ENCODE measurements at regions of chr12 and their contacts with region 1.

Region 1: DNA sequence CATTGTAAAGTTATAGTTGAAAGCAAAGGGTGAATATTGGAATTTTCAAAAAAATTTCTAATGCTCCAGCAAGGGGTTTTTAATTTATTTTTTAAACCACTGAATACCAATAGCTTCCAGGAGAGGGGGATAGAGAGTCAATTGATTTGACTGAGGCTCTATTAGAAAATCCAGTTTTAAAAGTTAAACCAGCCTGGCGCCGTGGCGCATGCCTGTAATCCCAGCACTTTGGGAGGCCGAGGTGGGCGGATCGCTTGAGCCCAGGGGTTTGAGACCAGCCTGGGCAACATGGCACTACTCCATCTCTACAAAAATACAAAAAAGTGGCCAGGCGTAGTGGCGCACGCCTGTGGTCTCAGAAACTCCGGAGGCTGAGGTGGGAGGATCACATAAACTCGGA is 150.1 kb downstream of the SLC38A4 start:
- DNase-seq: peak; percentile 32 to 66 (median 65)
- ATAC-seq: no peak
- H3K4me3 ChIP-seq: no peak overlapping the region
- H3K27ac ChIP-seq: no peak overlapping the region
- H3K4me1 ChIP-seq: no peaks in the 10 kb centered on the region
- H3K27me3 ChIP-seq: no peaks in the 10 kb centered on the region

Region 2: GRCh38 chr12:46131729-46132469 is 543.8 kb before region 1 on chr12:
- intact Hi-C with region 1: loop called in 1 of 4 experiments (anchors 10 kb)
- DNase-seq: peak in 1 of 3 donors; percentile 43
- ATAC-seq: peak in 1 of 2 donors; percentile 36
- H3K4me3 ChIP-seq: no peak overlapping the region
- H3K27ac ChIP-seq: no peak overlapping the region
- H3K4me1 ChIP-seq: peaks cover 2% of the 10 kb centered on the region
- H3K27me3 ChIP-seq: no peaks in the 10 kb centered on the region

Region 3: DNA sequence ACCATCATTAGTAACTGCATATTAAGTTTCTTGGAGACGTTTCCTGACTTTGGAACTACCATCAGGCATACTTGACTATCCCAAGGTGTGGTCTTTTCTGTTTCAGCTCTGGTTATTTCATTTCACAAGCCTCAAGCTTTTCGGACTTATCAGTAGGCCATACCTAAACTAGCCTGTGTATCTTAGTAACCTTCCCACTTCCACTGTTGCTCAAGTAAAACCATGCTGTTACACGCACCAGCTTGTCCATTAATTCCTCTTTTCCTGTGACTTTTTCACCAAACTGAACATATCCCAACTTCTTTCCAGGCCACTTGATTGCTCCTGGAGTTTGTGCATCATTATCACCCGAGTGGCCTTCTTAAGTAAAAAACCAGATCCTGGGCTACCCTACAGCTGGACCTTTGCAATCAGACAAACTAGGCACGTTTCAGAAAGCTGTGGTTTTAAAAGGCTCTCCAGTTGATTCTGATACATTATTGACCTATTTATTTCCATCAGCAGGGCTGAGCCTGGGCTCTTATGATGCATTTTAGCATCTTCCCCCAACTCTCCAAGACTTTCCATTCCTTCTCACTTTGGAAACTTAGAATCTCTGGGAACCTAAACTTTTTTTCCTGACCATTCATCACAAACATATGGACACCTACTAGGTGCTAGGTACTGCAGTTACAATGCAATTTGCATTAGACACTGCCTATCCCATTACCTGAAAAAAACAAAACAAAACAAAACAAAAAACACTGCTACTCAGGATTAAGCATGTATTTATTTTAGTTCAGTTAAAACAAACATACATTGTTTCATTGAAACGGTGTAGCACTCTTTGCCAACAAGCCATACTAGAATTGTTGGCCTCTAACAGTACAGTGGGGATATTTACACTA is 318.1 kb before region 1 on chr12:
- intact Hi-C with region 1: loop called in 1 of 4 experiments (anchors 10 kb)
- DNase-seq: no peak
- ATAC-seq: peak; percentile 50 to 52
- H3K4me3 ChIP-seq: no peak overlapping the region
- H3K27ac ChIP-seq: no peak overlapping the region
- H3K4me1 ChIP-seq: peaks cover 2% of the 10 kb centered on the region
- H3K27me3 ChIP-seq: no peaks in the 10 kb centered on the region

Region 4: DNA sequence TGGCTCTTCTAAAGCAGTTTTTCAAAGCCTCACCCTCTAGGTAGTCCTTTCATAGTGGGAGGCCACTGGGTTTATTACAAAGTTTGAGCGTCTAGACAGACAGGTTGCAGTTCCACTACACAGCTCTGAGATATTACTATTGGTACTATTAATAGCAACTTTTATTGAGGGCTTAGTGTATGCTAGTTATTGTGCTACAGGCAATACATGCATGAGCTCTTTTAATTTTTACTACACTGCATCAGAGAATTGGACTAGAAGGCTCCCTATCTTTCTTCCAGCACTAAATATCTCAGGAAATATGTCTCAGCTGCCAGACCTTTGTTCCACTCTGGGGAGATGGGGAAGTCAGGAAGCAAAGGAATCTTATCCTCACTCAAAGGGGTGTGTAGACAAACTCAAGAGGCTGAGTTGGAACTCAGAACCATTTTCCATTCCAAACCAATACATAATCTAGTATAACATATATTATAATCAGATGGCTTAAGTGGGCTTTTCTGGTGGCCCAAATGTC is 141.4 kb before region 1 on chr12:
- intact Hi-C with region 1: no loop called
- DNase-seq: no peak
- ATAC-seq: peak; percentile 79 to 87
- H3K4me3 ChIP-seq: no peak overlapping the region
- H3K27ac ChIP-seq: no peak overlapping the region
- H3K4me1 ChIP-seq: peaks cover 8% of the 10 kb centered on the region
- H3K27me3 ChIP-seq: no peaks in the 10 kb centered on the region

Region 5: GRCh38 chr12:46617167-46617566 is 58.6 kb before region 1 on chr12:
- intact Hi-C with region 1: no loop called
- DNase-seq: peak in 2 of 3 donors; percentile 17 to 49
- ATAC-seq: peak; percentile 93 to 98
- H3K4me3 ChIP-seq: no peak overlapping the region
- H3K27ac ChIP-seq: no peak overlapping the region
- H3K4me1 ChIP-seq: no peaks in the 10 kb centered on the region
- H3K27me3 ChIP-seq: no peaks in the 10 kb centered on the region

Region 6: DNA sequence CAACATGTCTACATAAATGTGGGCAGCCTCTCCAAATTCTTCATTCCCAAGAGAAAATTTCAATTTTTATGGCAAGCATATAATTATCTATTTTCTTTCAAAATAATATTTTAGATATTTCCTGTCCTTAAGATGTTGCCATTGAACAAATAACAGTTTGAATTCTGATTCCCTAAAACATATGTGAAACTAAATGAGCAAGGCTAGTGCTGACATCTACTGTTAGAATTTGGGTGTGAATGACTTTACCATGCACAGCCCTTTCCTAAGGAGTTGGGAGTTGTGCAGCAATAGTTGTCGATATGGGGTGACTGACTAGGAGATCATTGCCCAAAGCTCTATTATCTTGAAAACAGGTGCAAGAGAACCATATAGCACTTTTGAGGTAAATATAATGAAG is 258.2 kb after region 1 on chr12:
- intact Hi-C with region 1: loop called in 3 of 4 experiments (anchors 5 to 10 kb)
- DNase-seq: no peak
- ATAC-seq: peak; percentile 52 to 55
- H3K4me3 ChIP-seq: no peak overlapping the region
- H3K27ac ChIP-seq: no peak overlapping the region
- H3K4me1 ChIP-seq: no peaks in the 10 kb centered on the region
- H3K27me3 ChIP-seq: no peaks in the 10 kb centered on the region

Region 7: GRCh38 chr12:47014474-47014873 is 338.7 kb after region 1 on chr12:
- intact Hi-C with region 1: loop called in 1 of 4 experiments (anchors 10 kb)
- DNase-seq: no peak
- ATAC-seq: no peak
- H3K4me3 ChIP-seq: no peak overlapping the region
- H3K27ac ChIP-seq: no peak overlapping the region
- H3K4me1 ChIP-seq: no peaks in the 10 kb centered on the region
- H3K27me3 ChIP-seq: no peaks in the 10 kb centered on the region

Measured in right cardiac atrium (tissue), 5 donors.